CD4-positive, alpha-beta T cell (primary cell): ENCODE measurements at regions of chr12 and their contacts with region 1.

Region 1: DNA sequence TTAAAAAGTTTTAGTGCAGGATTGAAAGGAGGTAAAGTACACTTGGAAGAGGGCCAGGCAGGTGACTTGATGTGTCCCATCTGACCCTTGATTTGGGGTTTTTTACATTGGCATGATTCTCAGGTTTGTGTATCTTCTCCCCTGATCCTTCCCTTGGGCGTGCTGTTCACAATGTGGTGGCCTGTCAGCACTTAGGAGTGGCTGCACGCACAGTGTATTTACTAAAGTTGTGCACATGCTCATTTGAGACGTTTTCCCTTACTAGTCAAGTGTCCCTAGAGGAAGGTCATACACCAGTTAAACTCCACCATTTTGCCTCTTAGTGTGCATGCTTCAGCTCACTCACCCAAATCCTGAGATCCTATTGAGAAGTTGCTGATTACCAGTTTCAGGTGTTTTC is 145.7 kb upstream of the PLEKHA5 start:
- DNase-seq: no peak
- ATAC-seq: no peak
- H3K4me3 ChIP-seq: no peak overlapping the region
- H3K4me3 Mint-ChIP-seq: no peak overlapping the region
- H3K27ac ChIP-seq: no peak overlapping the region
- H3K27ac Mint-ChIP-seq: no peak overlapping the region
- H3K4me1 ChIP-seq: no peaks in the 10 kb centered on the region
- H3K4me1 Mint-ChIP-seq: no peaks in the 10 kb centered on the region
- H3K27me3 ChIP-seq: no peaks in the 10 kb centered on the region
- H3K27me3 Mint-ChIP-seq: no peaks in the 10 kb centered on the region
- CTCF ChIP-seq: no peak

Region 2: GRCh38 chr12:18955594-18955993 is 28.3 kb before region 1 on chr12:
- CTCF ChIA-PET with region 1: no interaction called
- POLR2A ChIA-PET with region 1: no interaction called
- intact Hi-C with region 1: loop called in 1 of 2 experiments (anchors 1 kb)
- DNase-seq: no peak
- ATAC-seq: no peak
- H3K4me3 ChIP-seq: no peak overlapping the region
- H3K4me3 Mint-ChIP-seq: no peak overlapping the region
- H3K27ac ChIP-seq: no peak overlapping the region
- H3K27ac Mint-ChIP-seq: no peak overlapping the region
- H3K4me1 ChIP-seq: no peaks in the 10 kb centered on the region
- H3K4me1 Mint-ChIP-seq: no peaks in the 10 kb centered on the region
- H3K27me3 ChIP-seq: no peaks in the 10 kb centered on the region
- H3K27me3 Mint-ChIP-seq: no peaks in the 10 kb centered on the region
- CTCF ChIP-seq: no peak